ENCODE measurements at regions of chr11 and their contacts with region 1.

Region 1: GRCh38 chr11:82900277-82901164 is at the start of gene PRCP:
- DNase-seq: peak; percentile 88
- CTCF ChIP-seq: no peak

Region 2: GRCh38 chr11:83071567-83072349 is 171.2 kb after region 1 on chr11 and contains the start of gene RAB30:
- in situ Hi-C with region 1: loop called (anchors 10 kb)
- DNase-seq: peak; percentile 90
- CTCF ChIP-seq: no peak

Region 3: GRCh38 chr11:83241291-83241946 is 340.9 kb after region 1 on chr11:
- in situ Hi-C with region 1: loop called (anchors 10 kb)
- DNase-seq: peak; percentile 17
- CTCF ChIP-seq: peak; percentile 53

Measured in GM13977 (cell line).